Heart left ventricle (tissue), 16 donors: ENCODE measurements at regions of chr9 and their contacts with region 1.

Region 1: DNA sequence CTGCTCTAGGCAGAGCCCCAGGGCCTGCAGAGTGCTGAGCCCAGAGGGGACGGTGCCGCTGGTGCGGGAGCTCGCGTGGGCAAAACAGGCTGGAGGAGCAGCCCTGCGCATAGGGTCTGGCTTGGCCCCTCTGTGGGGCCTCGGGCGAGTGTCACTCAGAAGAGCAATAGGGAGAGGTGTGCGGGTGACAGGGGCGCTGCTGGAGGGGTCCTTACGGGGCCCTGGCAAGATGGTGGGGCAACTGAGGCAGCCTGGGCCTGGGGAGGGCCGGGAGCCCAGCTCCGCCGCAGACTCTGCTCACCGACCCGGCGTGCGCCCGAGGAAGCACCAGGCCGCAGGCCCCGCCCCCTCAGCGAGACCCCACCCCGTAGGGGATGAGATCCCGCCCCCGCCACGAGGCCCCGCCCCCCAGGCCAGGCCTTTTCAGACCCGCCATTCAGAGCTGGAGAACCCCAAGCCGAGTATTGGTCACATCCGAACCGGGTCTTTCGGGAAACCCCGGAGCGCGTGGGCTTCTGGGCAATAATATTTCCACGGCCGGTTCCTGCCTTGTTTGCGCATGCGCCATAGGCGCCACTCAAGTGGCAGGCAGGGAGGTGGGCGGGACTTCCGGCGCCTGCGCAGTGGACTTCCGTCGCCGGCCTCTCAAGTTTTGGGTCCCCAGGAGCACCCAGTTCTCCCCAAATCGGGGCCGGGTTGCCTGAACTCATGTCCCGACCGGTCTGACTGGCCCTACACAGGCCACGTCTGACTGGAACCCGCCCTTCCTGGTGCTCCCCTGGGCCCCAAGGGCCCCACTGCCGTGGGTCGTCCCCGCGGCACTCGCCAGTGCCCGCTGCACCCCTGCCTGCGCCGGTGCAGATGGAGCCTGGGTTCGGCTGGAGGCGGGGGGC is 1.3 kb upstream of the RNF208 start:
- DNase-seq: peak; percentile 98 to 99 (median 99)
- ATAC-seq: peak; percentile 91 to 95 (median 92)
- H3K4me3 ChIP-seq: peak overlapping the region; percentile 50 to 92 (median 74)
- H3K27ac ChIP-seq: peak overlapping the region; percentile 33 to 95 (median 94)
- H3K4me1 ChIP-seq: peaks cover 0 to 44% (median 24%) of the 10 kb centered on the region in 12 donors
- H3K27me3 ChIP-seq: peaks cover 0 to 7% (median 0%) of the 10 kb centered on the region in 9 donors
- CTCF ChIP-seq: no peak
- POLR2A ChIP-seq: peak in 1 of 2 donors; percentile 77

Region 2: DNA sequence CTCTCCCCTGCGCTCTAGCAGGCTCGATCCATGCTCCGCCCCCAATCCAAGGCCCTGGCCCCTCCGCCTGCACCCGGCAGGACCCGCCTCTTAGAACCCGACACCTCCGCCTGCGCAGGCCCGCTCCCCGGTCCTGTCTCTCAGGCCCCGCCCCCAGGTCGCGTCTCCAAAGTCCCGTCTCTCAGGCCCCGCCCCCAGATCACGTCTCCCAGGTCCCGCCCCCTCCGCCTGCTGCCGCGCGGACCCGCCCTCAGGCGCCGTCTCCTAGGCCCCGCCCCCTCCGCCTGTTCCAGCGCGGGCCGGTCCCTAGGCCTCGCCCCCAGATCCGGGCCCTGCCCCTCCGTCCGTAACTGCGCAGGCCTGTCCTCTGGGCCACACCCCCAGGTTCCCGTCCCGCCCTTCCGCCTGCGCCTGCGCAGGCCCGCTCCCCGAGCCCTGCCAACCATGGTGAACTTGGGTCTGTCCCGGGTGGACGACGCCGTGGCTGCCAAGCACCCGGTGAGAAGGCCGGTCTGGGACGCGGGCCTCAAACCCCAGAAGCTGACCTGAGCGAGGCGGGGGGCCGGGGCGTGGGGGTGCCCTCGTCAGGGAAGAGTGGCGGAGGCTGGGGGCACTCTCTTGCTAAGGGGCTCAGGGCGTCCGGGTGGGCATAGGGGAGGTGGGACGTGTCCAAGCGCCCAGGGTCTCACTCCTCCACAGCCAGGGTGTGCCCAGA is 432.2 kb before region 1 on chr9 and contains the start of gene TMEM141:
- intact Hi-C with region 1: loop called in 2 of 10 experiments (anchors 5 to 10 kb)
- DNase-seq: peak; percentile 100
- ATAC-seq: peak; percentile 95 to 96 (median 96)
- H3K4me3 ChIP-seq: peak within 1 kb of the TSS; percentile 68 to 94 (median 82)
- H3K27ac ChIP-seq: peak within 1 kb of the TSS; percentile 92 to 99 (median 96)
- H3K4me1 ChIP-seq: peaks cover 6 to 58% (median 29%) of the 10 kb centered on the region in 12 donors
- H3K27me3 ChIP-seq: peaks cover 0 to under 1% (median 0%) of the 10 kb centered on the region in 9 donors
- CTCF ChIP-seq: no peak
- POLR2A ChIP-seq: peak in 1 of 2 donors; percentile 82
- total RNA-seq, gene TMEM141: 45.6 to 122 (median 63.3) TPM

Region 3: DNA sequence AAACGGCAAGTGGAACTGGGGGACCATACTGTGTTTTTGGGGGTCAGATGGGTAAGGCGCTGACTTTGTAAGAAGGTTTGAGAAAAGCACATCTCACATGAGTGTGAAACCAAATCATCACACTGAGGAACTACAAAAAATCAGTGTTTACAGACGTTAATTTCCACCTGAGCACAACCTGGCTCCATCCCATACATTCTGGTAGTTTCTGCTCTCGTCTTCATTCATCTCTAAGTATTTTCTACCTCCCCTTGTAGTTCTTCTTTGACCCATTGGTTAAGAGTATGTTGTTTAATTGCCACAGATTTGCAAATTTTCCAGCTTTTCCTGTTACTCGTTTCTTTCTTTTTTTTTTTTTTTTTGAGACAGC is 99.9 kb before region 1 on chr9:
- intact Hi-C with region 1: loop called (anchors 1 to 5 kb)
- DNase-seq: no peak
- ATAC-seq: no peak
- H3K4me3 ChIP-seq: no peak overlapping the region
- H3K27ac ChIP-seq: no peak overlapping the region
- H3K4me1 ChIP-seq: peaks cover 0 to 23% (median 18%) of the 10 kb centered on the region in 12 donors
- H3K27me3 ChIP-seq: no peaks in the 10 kb centered on the region
- CTCF ChIP-seq: no peak
- POLR2A ChIP-seq: no peak

Region 4: DNA sequence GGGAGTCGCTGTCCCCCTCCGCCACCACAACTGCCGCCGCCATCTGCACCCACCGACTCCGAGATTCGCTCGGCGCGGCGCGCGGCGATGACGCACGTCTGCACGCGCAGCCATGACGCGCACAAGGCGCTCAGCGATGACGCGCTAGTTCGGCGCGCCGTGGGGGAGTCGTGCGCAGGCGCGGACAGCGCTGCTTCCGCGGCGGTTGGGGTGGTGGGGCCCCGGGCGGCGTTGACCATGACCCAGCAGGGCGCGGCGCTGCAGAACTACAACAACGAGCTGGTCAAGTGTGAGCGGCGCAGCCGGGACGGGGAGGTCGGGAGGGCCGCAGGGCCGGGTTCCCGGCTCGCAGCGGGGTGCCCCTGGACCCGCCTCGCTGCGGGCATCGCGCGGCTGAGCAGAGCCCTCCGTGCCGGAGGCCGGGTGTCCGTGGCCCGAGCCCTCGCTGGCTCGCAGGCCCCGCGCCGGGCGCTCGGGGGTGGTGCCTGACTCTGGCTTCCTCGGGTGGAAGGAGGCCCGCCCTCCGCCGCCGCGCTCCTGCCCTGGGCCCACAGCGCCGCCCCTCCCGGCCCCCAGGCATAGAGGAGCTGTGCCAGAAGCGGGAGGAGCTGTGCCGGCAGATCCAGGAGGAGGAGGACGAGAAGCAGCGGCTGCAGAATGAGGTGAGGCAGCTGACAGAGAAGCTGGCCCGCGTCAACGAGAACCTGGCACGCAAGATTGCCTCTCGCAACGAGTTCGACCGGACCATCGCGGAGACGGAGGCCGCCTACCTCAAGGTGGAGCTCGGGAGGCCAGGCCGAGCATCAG is 34.6 kb before region 1 on chr9 and contains the starts of genes ANAPC2 and SSNA1:
- intact Hi-C with region 1: loop called in 8 of 10 experiments (anchors 1 to 5 kb)
- DNase-seq: peak; percentile 91 to 97 (median 93)
- ATAC-seq: peak; percentile 72 to 91 (median 90)
- H3K4me3 ChIP-seq: peak within 1 kb of the TSS; percentile 68 to 100 (median 90)
- H3K27ac ChIP-seq: peak within 1 kb of the TSS; percentile 92 to 99 (median 99)
- H3K4me1 ChIP-seq: peaks cover 18 to 75% (median 42%) of the 10 kb centered on the region in 12 donors
- H3K27me3 ChIP-seq: no peaks in the 10 kb centered on the region
- CTCF ChIP-seq: peak in 9 of 12 donors; percentile 16 to 42 (median 29)
- POLR2A ChIP-seq: peak in 1 of 2 donors; percentile 95
- total RNA-seq, gene ANAPC2: 14.3 to 35.9 (median 28.9) TPM
- total RNA-seq, gene SSNA1: 46.0 to 123 (median 59.9) TPM

Region 5: DNA sequence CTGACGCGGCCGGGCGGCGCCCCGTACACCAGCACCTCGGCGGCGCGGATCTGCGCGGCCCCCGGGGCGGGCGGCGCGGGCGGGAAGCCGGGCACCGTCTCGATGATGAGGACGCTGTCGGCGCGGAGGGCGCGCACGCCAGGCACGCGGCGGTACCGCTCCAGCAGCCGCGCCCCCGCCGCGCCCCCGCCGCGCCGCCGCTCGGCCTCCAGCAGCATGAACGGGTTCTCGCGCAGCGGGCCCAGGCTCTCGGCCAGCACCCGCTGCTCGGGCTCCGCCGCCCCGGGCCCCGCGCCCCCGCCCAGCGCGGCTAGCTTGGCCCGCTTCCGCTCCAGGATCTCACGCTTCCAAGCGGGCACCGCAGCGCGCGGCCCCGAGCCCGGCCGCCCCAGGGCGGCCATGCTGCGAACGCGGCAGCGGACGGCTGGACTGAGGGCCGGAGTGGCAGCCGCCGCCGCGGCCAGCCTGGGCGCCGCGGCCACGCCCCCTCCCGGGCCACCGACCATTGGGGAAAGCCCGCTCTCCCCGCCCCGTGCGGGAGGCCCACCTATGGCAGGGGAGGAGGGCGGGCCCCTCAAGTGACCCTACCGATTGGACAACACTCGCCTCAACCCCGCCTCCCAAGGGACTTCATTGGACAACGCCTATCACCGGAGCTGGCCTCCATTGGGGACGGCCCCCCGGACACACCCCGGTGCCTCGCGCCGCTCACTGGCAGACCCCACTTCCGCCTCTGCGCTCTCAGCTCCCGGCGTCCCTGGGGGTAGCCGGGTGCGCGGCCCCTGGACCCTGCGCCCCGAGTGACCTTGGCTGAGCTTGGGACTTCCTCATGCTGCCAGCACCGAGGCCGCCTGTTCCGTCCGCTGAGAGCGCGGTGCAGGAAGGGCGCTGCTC is 22.8 kb before region 1 on chr9 and contains the start of gene TPRN:
- intact Hi-C with region 1: loop called in 2 of 10 experiments (anchors 2 kb)
- DNase-seq: peak; percentile 99 to 100 (median 100)
- ATAC-seq: peak; percentile 97 to 99 (median 98)
- H3K4me3 ChIP-seq: peak within 1 kb of the TSS; percentile 23 to 94 (median 68)
- H3K27ac ChIP-seq: peak within 1 kb of the TSS; percentile 48 to 99 (median 88)
- H3K4me1 ChIP-seq: peaks cover 10 to 88% (median 74%) of the 10 kb centered on the region in 12 donors
- H3K27me3 ChIP-seq: no peaks in the 10 kb centered on the region
- CTCF ChIP-seq: peak in 1 of 12 donors; percentile 7
- POLR2A ChIP-seq: peak; percentile 80 to 85
- total RNA-seq, gene TPRN: 11.5 to 18.0 (median 16.6) TPM

Region 6: DNA sequence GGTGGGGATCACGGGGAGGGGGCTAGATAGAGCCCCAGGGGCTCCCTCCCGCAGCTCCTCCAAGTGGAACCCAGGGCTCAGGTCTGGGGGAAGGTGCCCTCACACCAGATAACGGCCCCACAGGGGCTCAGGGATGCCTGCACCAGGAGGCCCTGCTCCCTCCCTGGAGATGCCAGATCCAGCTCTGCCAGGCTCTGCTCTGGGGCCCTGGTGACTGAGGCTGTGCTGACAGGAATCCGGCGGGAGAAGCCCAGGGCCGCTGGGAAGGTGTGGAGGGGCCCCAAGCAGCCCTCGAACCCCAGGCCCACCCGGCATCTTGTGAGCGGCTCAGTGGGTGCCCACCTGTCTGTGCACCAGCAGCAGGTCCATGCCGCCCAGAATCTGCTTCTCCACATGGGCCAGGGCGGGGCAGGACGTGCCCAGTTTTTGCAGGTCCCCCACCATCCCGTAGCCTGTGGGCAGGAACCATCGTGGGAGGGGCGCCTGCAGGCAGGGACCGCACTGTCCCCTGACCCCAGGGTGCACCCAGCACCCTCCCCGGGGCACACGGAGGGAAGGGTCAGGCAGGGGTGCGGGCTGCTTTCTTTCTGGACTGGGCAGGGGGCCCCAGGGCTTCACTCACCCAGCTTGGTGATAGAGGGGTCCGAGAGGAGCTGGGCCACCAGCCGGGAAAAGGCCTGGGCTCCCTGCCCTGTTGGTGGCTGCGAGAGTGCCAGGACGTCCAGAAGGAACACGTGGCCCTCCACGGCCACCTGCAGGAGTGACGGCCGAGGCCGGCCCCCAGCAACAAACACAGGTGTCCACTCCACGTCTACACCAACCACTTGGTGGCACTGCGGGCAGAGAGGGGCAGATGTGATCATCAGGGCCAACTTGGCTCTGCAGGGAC is 127.6 kb after region 1 on chr9:
- intact Hi-C with region 1: no loop called
- DNase-seq: peak in 1 of 5 donors; percentile 56
- ATAC-seq: no peak
- H3K4me3 ChIP-seq: no peak overlapping the region
- H3K27ac ChIP-seq: no peak overlapping the region
- H3K4me1 ChIP-seq: peaks cover 0 to 27% (median 13%) of the 10 kb centered on the region in 12 donors
- H3K27me3 ChIP-seq: no peaks in the 10 kb centered on the region
- CTCF ChIP-seq: no peak
- POLR2A ChIP-seq: no peak